Naive thymus-derived CD4-positive, alpha-beta T cell (primary cell): ENCODE measurements at regions of chr1 and their contacts with region 1.

Region 1: DNA sequence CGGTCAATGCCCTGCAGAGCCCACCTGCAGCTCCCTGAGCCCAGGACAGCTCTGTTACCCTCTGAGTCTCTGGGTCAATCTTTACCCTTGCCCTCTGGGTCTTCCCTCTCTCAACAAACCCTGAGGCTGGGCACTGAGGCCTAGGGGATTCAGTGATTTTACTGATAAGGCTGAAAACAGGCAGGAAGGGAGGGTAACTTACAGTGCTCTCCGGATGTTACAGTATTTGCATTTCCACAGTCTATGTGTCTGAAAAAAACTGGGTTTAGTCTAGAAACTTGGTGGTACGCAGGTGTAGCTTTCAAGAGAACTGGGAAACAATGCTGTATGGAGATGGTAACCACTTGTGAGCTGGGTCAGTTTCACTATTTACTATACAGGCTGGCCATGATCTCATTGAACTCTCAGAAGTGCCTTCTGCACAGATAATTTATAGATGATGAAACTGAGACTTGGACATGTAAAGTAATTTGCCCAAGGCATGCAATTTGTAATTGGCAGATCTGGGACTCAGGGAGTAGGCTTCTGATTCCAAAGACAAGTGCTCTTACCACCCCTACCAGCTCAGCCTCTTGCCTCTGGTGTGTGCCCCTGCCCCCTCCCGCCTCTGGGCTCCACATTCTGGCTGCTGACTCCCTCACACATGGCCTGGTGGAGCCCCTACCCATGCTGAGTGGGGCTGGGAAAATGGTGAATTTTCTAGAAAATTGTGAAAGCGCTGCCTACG is 48.8 kb downstream of the TENT5C start:
- DNase-seq: peak in 3 of 9 donors; percentile 31 to 47 (median 37)
- ATAC-seq: no peak
- H3K4me3 ChIP-seq: peak overlapping the region; percentile 2
- H3K4me3 Mint-ChIP-seq: peak overlapping the region; percentile 58 to 81 (median 70)
- H3K27ac ChIP-seq: no peak overlapping the region
- H3K27ac Mint-ChIP-seq: peak overlapping the region in 7 of 9 donors; percentile 33 to 93 (median 84)
- H3K4me1 ChIP-seq: peaks cover 65 to 92% of the 10 kb centered on the region in 2 donors
- H3K4me1 Mint-ChIP-seq: peaks cover 68 to 83% (median 78%) of the 10 kb centered on the region in 7 donors
- H3K27me3 ChIP-seq: no peaks in the 10 kb centered on the region
- H3K27me3 Mint-ChIP-seq: peaks cover 0 to 45% (median 14%) of the 10 kb centered on the region in 5 donors

Region 2: GRCh38 chr1:117093870-117094621 is 560.6 kb before region 1 on chr1:
- CTCF ChIA-PET with region 1: no interaction called
- POLR2A ChIA-PET with region 1: no interaction called
- intact Hi-C with region 1: no loop called
- DNase-seq: peak in 7 of 9 donors; percentile 2 to 31 (median 14)
- ATAC-seq: peak; percentile 79
- H3K4me3 ChIP-seq: no peak overlapping the region
- H3K4me3 Mint-ChIP-seq: no peak overlapping the region
- H3K27ac ChIP-seq: no peak overlapping the region
- H3K27ac Mint-ChIP-seq: peak overlapping the region in 3 of 9 donors; percentile 7 to 57 (median 12)
- H3K4me1 ChIP-seq: no peaks in the 10 kb centered on the region
- H3K4me1 Mint-ChIP-seq: peaks cover 0 to 19% (median 2%) of the 10 kb centered on the region in 7 donors
- H3K27me3 ChIP-seq: no peaks in the 10 kb centered on the region
- H3K27me3 Mint-ChIP-seq: no peaks in the 10 kb centered on the region

Region 3: DNA sequence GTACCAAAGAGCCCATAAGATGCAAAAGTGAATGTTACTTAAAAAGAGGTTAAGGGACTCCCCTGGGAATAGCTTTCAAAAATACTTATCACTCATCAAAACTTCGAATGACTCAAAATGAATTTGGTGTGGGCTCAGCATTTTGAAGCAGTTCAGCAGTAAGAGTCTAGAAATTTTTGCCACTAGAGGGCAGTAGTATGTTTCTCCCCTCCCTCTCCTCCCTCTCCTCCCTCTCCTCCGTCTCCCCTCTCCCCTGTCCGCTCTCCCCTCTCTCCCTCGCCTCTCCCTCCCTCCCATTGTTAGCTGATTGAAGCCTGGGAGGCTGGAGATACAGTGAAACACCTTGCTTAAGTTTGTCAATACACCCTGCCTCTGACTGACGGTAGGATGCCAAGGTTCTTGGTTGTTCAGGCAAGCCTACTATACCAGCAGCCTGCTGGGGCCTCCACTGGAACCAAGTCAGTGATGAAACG is 119.6 kb before region 1 on chr1:
- CTCF ChIA-PET with region 1: interaction called, 38 read pairs
- POLR2A ChIA-PET with region 1: no interaction called
- intact Hi-C with region 1: loop called in 1 of 2 experiments (anchors 1 kb)
- DNase-seq: peak; percentile 22 to 74 (median 60)
- ATAC-seq: peak; percentile 88
- H3K4me3 ChIP-seq: no peak overlapping the region
- H3K4me3 Mint-ChIP-seq: peak overlapping the region in 1 of 10 donors; percentile 17
- H3K27ac ChIP-seq: no peak overlapping the region
- H3K27ac Mint-ChIP-seq: peak overlapping the region in 4 of 9 donors; percentile 1 to 36 (median 14)
- H3K4me1 ChIP-seq: peaks cover 7 to 8% of the 10 kb centered on the region in 2 donors
- H3K4me1 Mint-ChIP-seq: peaks cover 0 to 9% (median 3%) of the 10 kb centered on the region in 7 donors
- H3K27me3 ChIP-seq: no peaks in the 10 kb centered on the region
- H3K27me3 Mint-ChIP-seq: no peaks in the 10 kb centered on the region

Region 4: GRCh38 chr1:117642963-117643362 is 11.7 kb before region 1 on chr1:
- CTCF ChIA-PET with region 1: no interaction called
- POLR2A ChIA-PET with region 1: interaction called, 4 read pairs
- intact Hi-C with region 1: loop called (anchors 2 kb)
- DNase-seq: no peak
- ATAC-seq: no peak
- H3K4me3 ChIP-seq: no peak overlapping the region
- H3K4me3 Mint-ChIP-seq: no peak overlapping the region
- H3K27ac ChIP-seq: no peak overlapping the region
- H3K27ac Mint-ChIP-seq: no peak overlapping the region
- H3K4me1 ChIP-seq: peaks cover 7 to 13% of the 10 kb centered on the region in 2 donors
- H3K4me1 Mint-ChIP-seq: peaks cover 0 to 9% (median 3%) of the 10 kb centered on the region in 7 donors
- H3K27me3 ChIP-seq: no peaks in the 10 kb centered on the region
- H3K27me3 Mint-ChIP-seq: peaks cover 15 to 41% (median 29%) of the 10 kb centered on the region in 5 donors

Region 5: GRCh38 chr1:117674521-117675397 is 20.1 kb after region 1 on chr1:
- CTCF ChIA-PET with region 1: interaction called, 3 read pairs
- POLR2A ChIA-PET with region 1: interaction called, 3 read pairs
- intact Hi-C with region 1: loop called in 1 of 2 experiments (anchors 1 kb)
- DNase-seq: peak in 7 of 9 donors; percentile 52 to 67 (median 58)
- ATAC-seq: peak; percentile 80
- H3K4me3 ChIP-seq: no peak overlapping the region
- H3K4me3 Mint-ChIP-seq: no peak overlapping the region
- H3K27ac ChIP-seq: no peak overlapping the region
- H3K27ac Mint-ChIP-seq: peak overlapping the region in 3 of 9 donors; percentile 53 to 68 (median 65)
- H3K4me1 ChIP-seq: peaks cover 0 to 5% of the 10 kb centered on the region in 2 donors
- H3K4me1 Mint-ChIP-seq: peaks cover 0 to 25% (median 4%) of the 10 kb centered on the region in 7 donors
- H3K27me3 ChIP-seq: no peaks in the 10 kb centered on the region
- H3K27me3 Mint-ChIP-seq: peaks cover 0 to 32% (median 0%) of the 10 kb centered on the region in 5 donors

Region 6: DNA sequence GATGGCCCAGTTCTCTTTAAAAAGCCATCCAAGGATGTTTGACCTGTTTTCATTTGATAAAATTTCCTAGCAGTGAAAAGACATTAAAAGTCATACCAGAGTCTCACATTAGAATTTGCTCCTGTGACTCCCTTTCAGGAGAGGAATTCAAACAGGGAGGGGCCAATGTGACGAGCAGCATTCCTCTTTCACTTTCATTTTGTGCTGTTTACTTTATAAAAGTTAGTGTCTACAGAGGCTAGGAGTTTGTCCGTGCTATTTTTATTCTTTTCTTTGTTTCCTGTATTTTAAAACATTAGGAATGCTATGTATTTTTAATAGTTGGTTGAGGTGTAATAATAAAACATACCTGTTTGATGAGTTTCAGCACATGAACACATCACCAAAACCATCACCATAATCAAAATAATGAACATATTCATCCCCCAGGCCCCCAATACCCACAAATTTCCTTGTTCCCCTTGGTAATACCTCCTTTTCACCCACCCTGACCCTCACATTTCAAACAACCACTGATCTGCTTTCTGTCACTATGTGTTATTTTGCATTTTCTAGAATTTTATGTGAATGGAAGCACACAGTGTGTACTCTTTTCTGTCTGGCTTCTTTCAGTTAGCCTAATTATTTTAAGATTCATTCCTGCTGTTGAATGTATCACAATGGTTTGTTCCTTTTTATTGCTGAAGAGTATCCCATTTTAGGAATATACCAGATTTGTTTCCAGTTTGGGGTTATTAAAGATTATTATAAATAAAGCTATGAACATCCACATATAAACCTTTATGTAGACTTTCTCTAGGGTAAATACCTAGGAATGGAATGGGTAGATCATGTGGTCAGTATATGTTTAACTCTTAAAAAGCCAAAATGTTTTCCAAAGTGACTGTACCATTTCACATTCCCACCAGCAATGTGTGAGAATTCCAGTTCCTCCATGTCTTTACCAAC is 80.7 kb after region 1 on chr1:
- CTCF ChIA-PET with region 1: no interaction called
- POLR2A ChIA-PET with region 1: no interaction called
- intact Hi-C with region 1: loop called in 1 of 2 experiments (anchors 2 kb)
- DNase-seq: peak in 7 of 9 donors; percentile 19 to 53 (median 44)
- ATAC-seq: peak; percentile 58
- H3K4me3 ChIP-seq: peak overlapping the region; percentile 59
- H3K4me3 Mint-ChIP-seq: peak overlapping the region; percentile 67 to 90 (median 81)
- H3K27ac ChIP-seq: peak overlapping the region; percentile 66
- H3K27ac Mint-ChIP-seq: peak overlapping the region; percentile 83 to 97 (median 92)
- H3K4me1 ChIP-seq: peaks cover 6 to 11% of the 10 kb centered on the region in 2 donors
- H3K4me1 Mint-ChIP-seq: peaks cover 14 to 23% (median 19%) of the 10 kb centered on the region in 7 donors
- H3K27me3 ChIP-seq: no peaks in the 10 kb centered on the region
- H3K27me3 Mint-ChIP-seq: peaks cover 0 to 11% (median 0%) of the 10 kb centered on the region in 5 donors

Region 7: DNA sequence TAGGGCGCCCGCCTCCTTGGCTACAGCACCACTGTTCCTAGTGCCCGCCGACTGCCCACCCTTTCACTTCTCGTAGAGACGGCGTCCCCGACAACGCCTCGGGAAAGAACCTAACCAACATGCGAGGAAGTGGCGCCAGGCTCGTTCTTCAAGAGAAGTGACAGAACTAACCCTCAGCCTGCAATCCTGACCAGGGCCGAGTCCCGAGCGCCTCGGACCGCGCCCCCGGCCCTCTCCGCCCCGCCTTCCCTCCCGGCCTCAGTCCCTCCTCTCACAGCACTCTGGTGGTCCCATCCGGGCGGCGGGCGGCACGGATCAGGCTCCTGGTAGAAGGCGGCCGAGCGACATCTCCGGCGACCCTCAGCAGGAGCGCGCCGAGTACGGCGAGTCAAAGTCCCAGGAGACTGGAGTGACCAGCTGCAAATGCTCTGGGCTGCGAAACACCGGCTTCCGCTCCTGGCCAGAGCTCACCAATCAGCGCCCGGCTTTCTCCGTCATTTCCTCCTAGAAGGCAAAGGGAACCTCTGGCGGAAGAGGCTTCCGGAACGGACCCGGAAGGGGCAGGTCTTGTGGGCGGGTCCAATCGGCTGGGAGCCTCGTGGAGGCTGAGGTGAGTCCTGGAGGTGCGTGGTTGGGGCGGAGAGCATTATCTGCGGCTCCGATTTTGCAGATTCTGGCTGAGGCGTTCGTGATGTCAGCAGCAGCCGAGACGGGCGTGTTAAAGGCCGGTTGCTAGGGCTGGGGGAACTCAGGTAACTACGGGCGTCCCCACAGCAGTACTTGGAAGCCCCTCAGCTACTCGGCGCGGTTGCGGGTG is 274.7 kb after region 1 on chr1 and contains the starts of genes GDAP2 and WDR3:
- CTCF ChIA-PET with region 1: no interaction called
- POLR2A ChIA-PET with region 1: no interaction called
- intact Hi-C with region 1: loop called (anchors 2 kb)
- DNase-seq: peak; percentile 84 to 98 (median 94)
- ATAC-seq: peak; percentile 96
- H3K4me3 ChIP-seq: peak within 1 kb of the TSS; percentile 94
- H3K4me3 Mint-ChIP-seq: peak within 1 kb of the TSS; percentile 90 to 97 (median 94)
- H3K27ac ChIP-seq: peak within 1 kb of the TSS; percentile 89
- H3K27ac Mint-ChIP-seq: peak within 1 kb of the TSS; percentile 74 to 97 (median 94)
- H3K4me1 ChIP-seq: peaks cover 24 to 30% of the 10 kb centered on the region in 2 donors
- H3K4me1 Mint-ChIP-seq: peaks cover 41 to 79% (median 71%) of the 10 kb centered on the region in 7 donors
- H3K27me3 ChIP-seq: no peaks in the 10 kb centered on the region
- H3K27me3 Mint-ChIP-seq: peaks cover 0 to 2% (median 0%) of the 10 kb centered on the region in 5 donors
- total RNA-seq, gene GDAP2: 22.3 to 31.2 (median 25.2) TPM
- total RNA-seq, gene WDR3: 12.2 to 34.6 (median 30.0) TPM

Region 8: GRCh38 chr1:118404024-118404423 is 749.4 kb after region 1 on chr1:
- CTCF ChIA-PET with region 1: no interaction called
- POLR2A ChIA-PET with region 1: no interaction called
- intact Hi-C with region 1: no loop called
- DNase-seq: no peak
- ATAC-seq: no peak
- H3K4me3 ChIP-seq: no peak overlapping the region
- H3K4me3 Mint-ChIP-seq: no peak overlapping the region
- H3K27ac ChIP-seq: no peak overlapping the region
- H3K27ac Mint-ChIP-seq: no peak overlapping the region
- H3K4me1 ChIP-seq: no peaks in the 10 kb centered on the region
- H3K4me1 Mint-ChIP-seq: no peaks in the 10 kb centered on the region
- H3K27me3 ChIP-seq: no peaks in the 10 kb centered on the region
- H3K27me3 Mint-ChIP-seq: no peaks in the 10 kb centered on the region